RWPE1 (cell line): ENCODE measurements at regions of chr2 and their contacts with region 1.

Region 1: GRCh38 chr2:26577434-26578112 is 63.6 kb downstream of the CIB4 start:
- DNase-seq: peak; percentile 85
- H3K27ac ChIP-seq: no peak overlapping the region
- CTCF ChIP-seq: peak; percentile 96

Region 2: GRCh38 chr2:26503231-26503880 is 74.2 kb before region 1 on chr2:
- CTCF ChIA-PET with region 1: interaction called, 11 read pairs
- POLR2A ChIA-PET with region 1: no interaction called
- DNase-seq: peak; percentile 91
- H3K27ac ChIP-seq: no peak overlapping the region
- CTCF ChIP-seq: peak; percentile 88

Region 3: DNA sequence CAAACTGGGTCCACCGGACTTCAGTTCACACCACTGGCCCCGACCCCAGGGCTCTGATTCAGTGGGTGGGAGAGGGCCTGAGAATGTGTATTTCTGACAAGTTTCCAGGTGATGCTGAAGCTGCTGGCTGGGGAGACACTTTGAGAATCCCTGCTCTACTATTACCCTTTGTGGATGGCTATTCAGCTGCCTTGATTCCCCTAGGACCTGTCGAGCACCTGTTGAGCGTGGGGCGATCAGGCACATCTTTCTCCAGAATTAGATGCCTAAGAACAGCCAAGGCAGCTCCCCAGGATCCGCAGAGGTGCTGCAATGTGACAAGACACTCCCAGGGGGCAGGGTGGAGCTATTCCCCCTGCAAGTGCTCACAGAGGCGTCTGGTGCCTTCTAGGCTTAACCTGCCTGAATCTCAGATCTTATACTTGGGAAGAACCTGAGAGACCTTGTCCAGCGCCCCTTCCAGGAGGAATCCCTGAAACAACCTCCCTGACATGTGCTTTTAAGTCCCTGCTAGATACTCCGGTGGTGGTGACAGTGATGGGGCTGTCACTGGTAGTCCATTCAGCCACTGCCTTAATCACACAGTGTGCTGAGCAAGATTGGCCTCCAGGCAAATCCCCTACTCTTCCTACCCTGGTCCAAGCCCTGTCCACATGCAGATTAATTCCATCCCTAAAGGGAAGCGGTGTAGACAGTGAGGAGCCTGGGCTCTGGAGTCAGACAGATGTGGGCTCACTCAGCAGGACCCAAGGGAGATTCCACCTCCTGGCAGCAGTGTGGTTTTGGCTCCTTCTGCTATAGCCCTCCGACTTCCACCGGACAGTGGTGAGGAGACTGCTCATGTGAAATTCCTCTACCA is 56.3 kb before region 1 on chr2:
- CTCF ChIA-PET with region 1: interaction called, 12 read pairs
- POLR2A ChIA-PET with region 1: no interaction called
- DNase-seq: peak; percentile 26
- H3K27ac ChIP-seq: no peak overlapping the region
- CTCF ChIP-seq: no peak